ENCODE measurements at regions of chr2 and their contacts with region 1.

Region 1: DNA sequence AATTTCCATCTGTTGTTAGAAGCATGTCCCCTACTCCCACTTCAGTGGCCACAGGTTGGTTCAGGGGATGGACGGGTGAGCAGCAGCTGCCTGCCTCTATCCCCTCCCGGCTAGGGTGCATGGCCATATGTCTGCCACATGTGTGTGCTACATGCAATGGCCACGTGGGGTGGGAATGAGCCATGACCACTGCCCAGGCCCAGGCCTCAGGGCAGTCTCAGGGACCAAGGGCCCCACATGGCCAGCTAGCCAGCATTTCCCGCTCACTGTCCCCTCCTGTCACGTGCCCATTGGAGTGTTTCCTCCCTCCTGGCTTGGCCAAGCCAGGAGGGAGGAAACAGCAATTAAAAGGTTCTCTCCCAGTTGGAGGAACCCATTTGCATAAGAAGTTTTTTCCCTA is 117.1 kb downstream of the KCNS3 start:
- DNase-seq: no peak
- H3K4me3 ChIP-seq: no peak overlapping the region
- H3K27ac ChIP-seq: no peak overlapping the region
- H3K4me1 ChIP-seq: no peaks in the 10 kb centered on the region
- H3K27me3 ChIP-seq: no peaks in the 10 kb centered on the region
- CTCF ChIP-seq: no peak

Region 2: DNA sequence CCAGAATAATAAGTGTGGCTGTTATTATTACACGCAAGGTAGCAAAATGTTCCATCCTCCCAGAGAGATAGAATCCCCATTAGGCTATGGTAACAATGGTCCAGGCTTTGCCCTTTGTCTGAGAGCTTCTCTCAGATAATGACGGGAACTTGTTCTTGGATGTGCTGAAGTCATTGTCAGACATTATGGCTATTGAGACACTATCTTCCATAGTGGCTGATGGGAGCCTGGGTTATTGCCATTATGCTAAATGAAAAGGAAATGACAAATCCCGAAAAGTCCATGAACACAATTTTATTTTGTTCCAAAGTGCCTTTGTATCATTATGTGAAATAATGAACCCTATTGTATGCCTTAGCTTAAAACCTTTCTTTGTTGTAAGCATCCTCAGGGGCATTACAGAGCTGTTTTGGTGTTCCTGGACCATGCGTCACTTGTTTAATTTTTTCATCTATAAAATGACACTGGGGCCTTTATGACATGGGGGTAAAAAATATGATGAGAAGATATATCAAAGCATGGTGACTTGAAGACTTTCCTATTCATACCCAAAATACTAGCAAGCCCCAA is 101.3 kb after region 1 on chr2:
- CTCF ChIA-PET with region 1: no interaction called
- dilution Hi-C with region 1: no loop called
- in situ Hi-C with region 1: no loop called
- intact Hi-C with region 1: no loop called
- DNase-seq: peak; percentile 30
- H3K4me3 ChIP-seq: no peak overlapping the region
- H3K27ac ChIP-seq: no peak overlapping the region
- H3K4me1 ChIP-seq: no peaks in the 10 kb centered on the region
- H3K27me3 ChIP-seq: peaks cover 12% of the 10 kb centered on the region
- CTCF ChIP-seq: no peak

Region 3: GRCh38 chr2:18178736-18179349 is 183.2 kb after region 1 on chr2:
- CTCF ChIA-PET with region 1: interaction called, 10 read pairs
- dilution Hi-C with region 1: no loop called
- in situ Hi-C with region 1: no loop called
- intact Hi-C with region 1: no loop called
- DNase-seq: peak; percentile 26
- H3K4me3 ChIP-seq: no peak overlapping the region
- H3K27ac ChIP-seq: no peak overlapping the region
- H3K4me1 ChIP-seq: no peaks in the 10 kb centered on the region
- H3K27me3 ChIP-seq: no peaks in the 10 kb centered on the region
- CTCF ChIP-seq: peak; percentile 84 to 86